Posterior cingulate gyrus (tissue), 11 donors: ENCODE measurements at regions of chr6 and their contacts with region 1.

Region 1: DNA sequence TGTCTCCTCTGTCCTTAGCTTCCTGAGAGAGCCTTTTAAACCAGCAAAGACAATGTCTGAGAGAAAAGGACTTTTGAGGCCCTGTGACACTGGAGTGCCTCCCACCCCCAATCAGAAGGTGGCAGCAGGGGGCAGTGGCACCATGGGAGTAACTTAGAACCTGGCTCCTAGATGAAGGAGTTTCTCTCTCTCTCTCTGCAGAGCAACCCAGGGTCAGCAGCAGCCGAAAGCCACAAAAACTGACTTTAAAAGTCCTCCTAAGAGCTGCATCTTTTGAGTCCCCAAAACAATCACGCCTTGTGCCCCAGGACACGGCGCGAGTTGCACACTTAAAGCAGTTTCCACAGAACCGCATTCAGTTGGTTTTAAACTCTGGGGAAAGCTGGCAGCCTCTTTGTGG is 5.3 kb upstream of the TCP11 start:
- DNase-seq: peak in 6 of 10 donors; percentile 40 to 94 (median 61)

Region 2: DNA sequence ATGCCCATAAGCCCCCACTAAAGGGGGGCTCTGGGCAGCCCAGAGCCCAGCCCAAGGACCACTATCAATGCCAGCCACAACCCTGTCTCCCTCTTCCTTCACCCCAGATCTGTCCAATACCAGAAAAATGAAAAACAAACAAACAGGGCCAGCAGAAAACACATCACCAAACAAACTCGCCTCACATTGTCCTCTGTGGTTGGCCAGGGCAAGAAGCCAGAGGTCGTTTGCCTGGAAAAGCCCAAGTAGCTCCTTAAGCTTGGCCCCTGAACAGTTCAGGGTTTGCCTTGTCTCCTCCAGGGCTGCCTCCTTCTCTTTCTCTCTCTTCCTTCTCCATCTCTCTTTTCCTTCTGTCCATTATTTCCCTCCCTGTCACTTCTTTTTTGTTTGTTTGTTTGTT is 57.2 kb after region 1 on chr6:
- intact Hi-C with region 1: loop called (anchors 2 kb)
- DNase-seq: no peak

Region 3: DNA sequence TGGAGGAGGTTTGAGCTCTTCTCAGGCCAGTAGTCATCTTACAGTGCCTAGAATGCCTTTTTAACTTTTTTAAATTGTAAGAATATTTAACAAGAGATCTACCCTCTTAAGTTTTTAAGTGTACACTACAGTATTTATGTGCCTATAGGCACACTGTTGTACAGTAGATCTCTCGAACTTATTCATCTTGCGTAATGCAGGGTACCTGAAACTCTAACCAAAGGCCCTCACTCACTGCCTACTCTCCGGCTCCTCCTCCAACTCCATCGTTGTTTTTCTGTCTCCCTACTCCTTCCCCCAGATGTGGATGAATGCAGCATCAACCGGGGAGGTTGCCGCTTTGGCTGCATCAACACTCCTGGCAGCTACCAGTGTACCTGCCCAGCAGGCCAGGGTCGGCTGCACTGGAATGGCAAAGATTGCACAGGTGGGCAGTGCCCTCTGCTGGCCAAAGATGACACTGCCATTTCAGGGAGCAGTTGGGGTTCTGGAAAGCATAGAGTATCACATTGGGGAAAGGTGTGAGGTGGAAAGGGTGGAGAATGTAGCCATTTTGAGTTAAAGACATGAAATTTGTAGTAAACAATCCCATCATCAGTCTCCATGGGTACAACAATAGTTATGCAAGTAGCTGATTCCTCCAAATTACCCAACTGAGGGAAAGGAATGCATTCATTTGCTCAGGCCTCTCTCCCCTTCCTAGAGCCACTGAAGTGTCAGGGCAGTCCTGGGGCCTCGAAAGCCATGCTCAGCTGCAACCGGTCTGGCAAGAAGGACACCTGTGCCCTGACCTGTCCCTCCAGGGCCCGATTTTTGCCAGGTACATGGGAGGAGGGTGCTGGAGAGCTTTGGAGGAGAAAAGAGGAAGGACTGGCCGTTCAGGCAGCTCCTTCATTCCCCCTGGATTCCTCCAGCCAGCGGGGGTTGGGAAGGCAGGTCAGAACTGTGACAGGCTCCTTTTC is 94.7 kb after region 1 on chr6:
- intact Hi-C with region 1: loop called (anchors 1 kb)
- DNase-seq: peak; percentile 50 to 95 (median 82)